ENCODE measurements at regions of chr12 and their contacts with region 1.

Region 1: DNA sequence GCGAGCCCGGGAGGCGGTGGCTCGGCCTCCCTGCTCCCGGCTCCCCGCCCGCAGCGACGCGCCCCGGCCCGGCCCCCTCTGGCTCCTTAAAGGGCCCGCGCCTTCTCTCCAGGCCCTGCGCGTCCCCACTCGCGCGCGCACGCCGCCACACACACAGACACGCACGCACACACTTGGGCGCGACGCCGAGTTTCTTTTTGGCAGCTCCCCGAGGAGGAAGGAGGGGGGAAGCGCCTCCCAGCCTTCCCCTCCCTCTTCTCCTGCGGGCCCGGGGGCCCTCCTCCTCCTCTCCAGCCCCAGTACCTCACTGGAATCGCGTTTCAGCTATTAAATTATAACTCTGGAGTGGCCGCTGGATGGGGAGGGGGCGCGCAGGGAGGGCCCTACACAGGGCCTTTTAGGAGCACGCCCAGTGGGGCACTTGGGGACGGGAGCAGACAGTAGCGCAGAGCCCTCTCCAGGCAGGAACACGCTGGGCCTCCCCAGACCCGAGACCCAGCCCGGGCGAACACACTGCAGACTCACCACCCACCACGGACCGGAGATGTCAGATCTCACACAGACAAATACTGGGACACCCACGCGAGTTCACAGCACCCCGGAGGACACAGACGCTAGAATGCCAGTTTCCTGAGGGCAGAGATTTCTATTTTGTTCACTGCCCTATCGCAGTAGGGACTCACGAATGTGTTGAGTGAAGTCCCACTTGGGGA is 405 bp upstream of the NCOR2 start:
- DNase-seq: no peak
- ATAC-seq: peak; percentile 76
- H3K4me3 ChIP-seq: peak overlapping the region; percentile 43 to 54
- H3K27ac ChIP-seq: peak overlapping the region; percentile 59
- H3K4me1 ChIP-seq: peaks cover 6 to 27% of the 10 kb centered on the region in 2 experiments; a peak in 3 of 4 replicates
- H3K27me3 ChIP-seq: no peaks in the 10 kb centered on the region
- CTCF ChIP-seq: no peak
- POLR2A ChIP-seq: no peak
- RAD21 ChIP-seq: 0 out of 2 replicates have a peak, but pooled peaks have one; percentile 10

Region 2: DNA sequence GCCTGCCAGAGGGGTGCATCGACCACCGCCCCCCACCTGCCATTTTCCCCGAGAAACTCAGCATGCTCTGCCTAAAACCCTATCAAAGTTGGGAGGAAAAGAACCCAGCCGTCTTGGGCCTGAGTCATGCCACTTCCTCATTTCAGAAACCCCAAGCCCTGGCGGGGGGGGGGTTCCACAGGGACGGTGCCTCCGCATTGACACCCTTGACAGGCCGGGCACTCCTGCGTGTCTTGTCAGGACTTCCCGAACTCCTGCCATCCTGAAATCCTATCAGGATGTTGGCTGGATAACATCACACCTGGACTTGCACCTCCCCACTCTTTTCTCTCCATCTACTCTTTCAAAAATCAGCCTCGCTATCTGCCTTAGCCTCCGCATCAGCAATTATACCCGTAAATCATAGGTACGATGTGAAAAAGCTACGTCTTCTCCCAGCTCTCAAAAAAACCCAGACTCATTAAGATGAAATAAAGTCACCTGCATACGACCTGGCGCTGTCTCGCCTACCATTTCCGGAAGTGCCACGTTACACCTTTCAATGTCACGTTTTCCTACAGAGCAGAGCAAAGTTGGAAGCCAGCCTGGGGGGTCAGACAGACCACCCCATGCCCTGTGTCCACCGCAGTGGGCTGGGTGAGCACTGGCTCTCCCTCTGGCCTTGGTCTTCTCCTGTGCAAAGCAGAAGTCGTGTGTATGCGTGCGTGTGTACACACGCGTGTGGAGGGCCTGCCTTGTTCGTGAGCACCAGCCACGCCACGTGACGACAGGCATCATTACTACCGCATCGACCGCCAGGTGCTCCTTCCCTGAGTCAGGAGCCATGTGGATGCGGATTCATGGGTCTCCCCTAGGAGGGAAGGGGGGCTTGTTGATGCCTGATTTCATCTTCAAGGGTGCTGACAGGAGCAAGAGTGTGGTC is 176.2 kb before region 1 on chr12:
- CTCF ChIA-PET with region 1: no interaction called
- POLR2A ChIA-PET with region 1: no interaction called
- RAD21 ChIA-PET with region 1: no interaction called
- intact Hi-C with region 1: loop called (anchors 10 kb)
- DNase-seq: peak; percentile 29
- ATAC-seq: peak; percentile 21
- H3K4me3 ChIP-seq: peak overlapping the region; percentile 36 to 46
- H3K27ac ChIP-seq: peak overlapping the region; percentile 88
- H3K4me1 ChIP-seq: peaks cover 47 to 89% of the 10 kb centered on the region in 2 experiments
- H3K27me3 ChIP-seq: no peaks in the 10 kb centered on the region
- CTCF ChIP-seq: no peak
- POLR2A ChIP-seq: no peak
- RAD21 ChIP-seq: no peak

Region 3: GRCh38 chr12:124636138-124636978 is 68.5 kb after region 1 on chr12:
- CTCF ChIA-PET with region 1: no interaction called
- POLR2A ChIA-PET with region 1: no interaction called
- RAD21 ChIA-PET with region 1: no interaction called
- intact Hi-C with region 1: loop called (anchors 5 kb)
- DNase-seq: peak; percentile 40
- ATAC-seq: peak; percentile 15
- H3K4me3 ChIP-seq: no peak overlapping the region
- H3K27ac ChIP-seq: peak overlapping the region; percentile 38; the same call in 1 of the 2 replicates
- H3K4me1 ChIP-seq: peaks cover 51 to 93% of the 10 kb centered on the region in 2 experiments
- H3K27me3 ChIP-seq: no peaks in the 10 kb centered on the region
- CTCF ChIP-seq: no peak
- POLR2A ChIP-seq: no peak
- RAD21 ChIP-seq: no peak

Region 4: GRCh38 chr12:124680863-124681778 is 113.3 kb after region 1 on chr12:
- CTCF ChIA-PET with region 1: no interaction called
- POLR2A ChIA-PET with region 1: no interaction called
- RAD21 ChIA-PET with region 1: no interaction called
- intact Hi-C with region 1: loop called (anchors 5 kb)
- DNase-seq: peak; percentile 79
- ATAC-seq: peak; percentile 84
- H3K4me3 ChIP-seq: peak overlapping the region in 1 of 2 experiments; percentile 25; a peak in 3 of 4 replicates
- H3K27ac ChIP-seq: peak overlapping the region; percentile 21
- H3K4me1 ChIP-seq: peaks cover 45 to 77% of the 10 kb centered on the region in 2 experiments
- H3K27me3 ChIP-seq: no peaks in the 10 kb centered on the region
- CTCF ChIP-seq: peak in 2 of 3 experiments; percentile 28 to 36; a peak in 4 of 6 replicates
- POLR2A ChIP-seq: no peak
- RAD21 ChIP-seq: peak; percentile 80

Region 5: DNA sequence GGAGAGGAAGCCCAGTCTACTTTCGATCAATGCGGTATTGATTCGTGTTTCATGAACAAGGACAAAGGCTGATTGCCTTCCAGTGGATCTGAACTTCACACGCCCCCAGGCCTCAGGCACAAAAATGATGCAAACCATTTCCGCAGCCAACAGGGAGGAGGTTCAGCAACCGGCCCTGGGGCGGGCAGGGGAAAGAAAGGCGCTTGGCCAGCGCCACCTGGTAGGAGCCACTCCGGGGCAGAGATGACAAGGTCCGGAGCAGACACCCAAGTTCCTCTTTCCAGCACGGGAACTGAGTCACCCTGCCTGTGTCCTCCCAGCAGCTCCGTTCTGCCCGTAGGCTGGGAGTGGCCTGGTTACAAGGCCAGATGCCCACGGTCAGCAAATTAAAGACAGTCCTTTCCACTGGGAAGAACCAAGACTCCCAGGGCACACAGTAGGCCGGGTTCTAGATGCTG is 159.5 kb after region 1 on chr12:
- CTCF ChIA-PET with region 1: no interaction called
- POLR2A ChIA-PET with region 1: no interaction called
- RAD21 ChIA-PET with region 1: no interaction called
- intact Hi-C with region 1: loop called (anchors 5 kb)
- DNase-seq: peak; percentile 83
- ATAC-seq: peak; percentile 89
- H3K4me3 ChIP-seq: peak overlapping the region; percentile 20 to 41
- H3K27ac ChIP-seq: peak overlapping the region; percentile 62
- H3K4me1 ChIP-seq: peaks cover 21 to 33% of the 10 kb centered on the region in 2 experiments
- H3K27me3 ChIP-seq: no peaks in the 10 kb centered on the region
- CTCF ChIP-seq: peak in 1 of 3 experiments; percentile 19; a peak in 2 of 6 replicates
- POLR2A ChIP-seq: no peak
- RAD21 ChIP-seq: peak; percentile 71

Region 6: DNA sequence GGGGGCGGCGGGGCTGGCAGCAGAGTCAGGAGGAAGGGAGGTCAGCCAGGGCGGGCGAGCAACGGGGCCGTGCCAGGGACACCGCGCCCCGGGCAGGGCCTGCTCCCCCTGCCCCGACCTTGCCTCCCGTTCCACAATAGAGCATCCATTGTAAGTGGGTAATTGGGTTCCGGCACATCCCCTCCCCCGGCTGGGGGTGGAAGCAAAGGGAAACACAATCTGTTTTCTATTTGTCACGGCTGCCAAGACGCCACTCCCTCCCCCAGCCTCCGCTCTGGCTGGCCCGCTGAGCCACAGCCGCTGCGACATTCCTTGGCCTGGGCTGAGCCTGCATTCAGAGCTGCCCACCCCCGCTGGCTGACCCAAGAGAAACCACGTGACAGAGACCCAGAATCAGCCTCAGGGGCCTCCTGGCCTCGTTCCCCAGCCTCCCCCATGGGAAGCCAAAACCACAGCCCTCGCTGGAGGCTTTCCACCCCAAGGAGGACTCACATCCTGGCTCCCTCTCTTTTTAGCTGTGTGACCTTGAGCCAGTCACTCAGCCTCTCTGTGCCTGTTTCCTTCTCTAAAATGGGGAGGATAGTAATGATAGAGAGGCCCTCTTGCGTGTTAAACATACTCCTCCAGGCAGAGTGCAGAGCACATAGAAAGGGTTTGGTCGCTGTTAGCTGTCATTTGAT is 178.2 kb after region 1 on chr12:
- CTCF ChIA-PET with region 1: no interaction called
- POLR2A ChIA-PET with region 1: no interaction called
- RAD21 ChIA-PET with region 1: no interaction called
- intact Hi-C with region 1: loop called (anchors 2 kb)
- DNase-seq: peak; percentile 67
- ATAC-seq: peak; percentile 79
- H3K4me3 ChIP-seq: peak overlapping the region; percentile 30 to 51
- H3K27ac ChIP-seq: peak overlapping the region; percentile 63
- H3K4me1 ChIP-seq: peaks cover 30 to 45% of the 10 kb centered on the region in 2 experiments
- H3K27me3 ChIP-seq: no peaks in the 10 kb centered on the region
- CTCF ChIP-seq: no peak
- POLR2A ChIP-seq: peak; percentile 14
- RAD21 ChIP-seq: no peak

Region 7: DNA sequence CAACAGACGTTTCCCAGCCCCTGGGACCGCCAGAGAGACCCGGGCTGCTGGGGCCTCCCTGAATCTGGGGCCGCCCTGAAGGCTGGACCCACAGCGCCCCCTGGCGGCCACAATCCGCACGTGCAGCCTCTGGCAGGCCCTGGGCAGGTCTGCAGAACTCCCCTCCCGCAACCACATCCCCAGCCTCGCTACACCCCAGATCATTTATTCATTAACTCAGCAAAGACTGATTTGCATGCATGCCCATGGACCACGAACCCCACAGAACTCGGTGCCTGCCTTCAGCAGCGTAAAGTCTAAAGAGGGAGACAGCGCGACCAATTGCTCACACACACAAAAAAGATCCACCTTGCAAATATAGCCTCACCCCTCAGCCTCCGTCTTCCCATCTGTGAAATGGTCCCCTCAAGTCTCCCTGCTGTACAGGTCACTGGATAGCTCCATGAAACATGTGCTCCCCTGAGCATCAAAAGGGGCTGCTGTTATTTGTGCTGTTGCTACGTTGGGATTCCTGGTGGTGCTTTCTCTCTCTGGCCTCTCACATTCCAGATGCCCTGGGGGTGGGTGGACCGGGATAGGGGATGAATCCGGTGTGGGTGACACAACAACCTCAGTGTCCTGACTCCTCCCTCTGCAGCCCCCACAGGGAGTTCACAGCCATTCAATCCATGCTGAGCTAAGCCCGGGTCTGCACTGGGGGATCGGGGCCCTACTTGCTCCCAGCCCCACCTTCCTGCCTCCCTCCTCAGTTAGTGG is 199.4 kb after region 1 on chr12:
- CTCF ChIA-PET with region 1: no interaction called
- POLR2A ChIA-PET with region 1: no interaction called
- RAD21 ChIA-PET with region 1: no interaction called
- intact Hi-C with region 1: loop called (anchors 5 kb)
- DNase-seq: no peak
- ATAC-seq: peak; percentile 87
- H3K4me3 ChIP-seq: no peak overlapping the region
- H3K27ac ChIP-seq: no peak overlapping the region
- H3K4me1 ChIP-seq: peaks cover 0 to 8% of the 10 kb centered on the region in 2 experiments; a peak in 1 of 4 replicates
- H3K27me3 ChIP-seq: no peaks in the 10 kb centered on the region
- CTCF ChIP-seq: peak; percentile 81 to 98 (median 90)
- POLR2A ChIP-seq: no peak
- RAD21 ChIP-seq: peak; percentile 98

Region 8: GRCh38 chr12:124906606-124907261 is 338.9 kb after region 1 on chr12:
- CTCF ChIA-PET with region 1: no interaction called
- POLR2A ChIA-PET with region 1: no interaction called
- RAD21 ChIA-PET with region 1: no interaction called
- intact Hi-C with region 1: no loop called
- DNase-seq: peak; percentile 94
- ATAC-seq: peak; percentile 55
- H3K4me3 ChIP-seq: no peak overlapping the region
- H3K27ac ChIP-seq: peak overlapping the region; percentile 26; the same call in 1 of the 2 replicates
- H3K4me1 ChIP-seq: peaks cover 38 to 55% of the 10 kb centered on the region in 2 experiments
- H3K27me3 ChIP-seq: no peaks in the 10 kb centered on the region
- CTCF ChIP-seq: peak in 2 of 3 experiments; percentile 95 to 99; a peak in 4 of 6 replicates
- POLR2A ChIP-seq: no peak
- RAD21 ChIP-seq: no peak

Measured in HCT116 (cell line).